ENCODE measurements at regions of chr16 and their contacts with region 1.

Region 1: DNA sequence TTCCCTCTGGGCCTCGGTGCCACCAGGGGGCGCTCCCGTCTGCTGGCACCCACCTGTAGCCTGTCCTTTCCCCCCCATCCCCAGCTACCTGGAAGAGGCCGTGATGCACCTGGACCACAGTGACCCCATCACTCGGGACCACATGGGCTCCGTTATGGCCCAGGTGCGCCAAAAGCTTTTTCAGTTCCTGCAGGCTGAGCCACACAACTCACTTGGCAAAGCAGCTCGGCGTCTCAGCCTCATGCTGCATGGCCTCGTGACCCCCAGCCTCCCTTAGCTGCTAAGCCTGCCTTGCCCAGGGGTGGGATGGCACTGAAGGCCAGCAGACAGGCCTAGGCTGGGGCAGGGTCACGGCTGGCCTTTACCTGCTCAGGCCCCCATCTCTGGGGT is 818 bp upstream of the NRN1L start:
- DNase-seq: peak; percentile 73
- H3K4me3 Mint-ChIP-seq: no peak overlapping the region
- H3K27ac Mint-ChIP-seq: no peak overlapping the region
- H3K4me1 Mint-ChIP-seq: no peaks in the 10 kb centered on the region
- H3K27me3 Mint-ChIP-seq: no peaks in the 10 kb centered on the region

Region 2: GRCh38 chr16:67750466-67750865 is 133.4 kb before region 1 on chr16:
- CTCF ChIA-PET with region 1: no interaction called
- POLR2A ChIA-PET with region 1: no interaction called
- intact Hi-C with region 1: no loop called
- DNase-seq: no peak
- H3K4me3 Mint-ChIP-seq: no peak overlapping the region
- H3K27ac Mint-ChIP-seq: no peak overlapping the region
- H3K4me1 Mint-ChIP-seq: no peaks in the 10 kb centered on the region
- H3K27me3 Mint-ChIP-seq: no peaks in the 10 kb centered on the region

Region 3: DNA sequence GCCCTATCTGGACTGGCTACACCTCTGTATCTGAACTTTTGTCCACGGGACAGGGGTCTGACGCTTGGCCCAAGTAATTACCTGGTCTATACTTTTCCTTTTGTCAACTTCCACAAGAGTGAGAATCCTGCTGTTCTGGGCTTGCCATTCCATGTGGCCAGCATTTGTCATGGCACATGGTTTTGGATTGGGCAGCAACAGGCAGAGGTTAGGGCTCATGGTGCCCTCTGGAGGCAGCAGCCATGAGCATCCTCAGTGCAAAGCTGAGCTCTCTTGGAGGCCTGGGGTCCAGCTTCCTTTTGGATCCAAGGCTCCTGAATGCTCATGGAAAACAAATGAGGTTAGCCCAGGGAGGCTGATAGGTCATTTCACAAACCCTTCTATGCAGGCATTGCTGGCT is 18.6 kb before region 1 on chr16:
- CTCF ChIA-PET with region 1: interaction called, 18 read pairs
- POLR2A ChIA-PET with region 1: no interaction called
- intact Hi-C with region 1: no loop called
- DNase-seq: peak; percentile 32
- H3K4me3 Mint-ChIP-seq: no peak overlapping the region
- H3K27ac Mint-ChIP-seq: no peak overlapping the region
- H3K4me1 Mint-ChIP-seq: peaks cover 10% of the 10 kb centered on the region
- H3K27me3 Mint-ChIP-seq: no peaks in the 10 kb centered on the region

Region 4: GRCh38 chr16:67872786-67873537 is 10.9 kb before region 1 on chr16 and contains the start of gene EDC4:
- CTCF ChIA-PET with region 1: interaction called, 20 read pairs
- POLR2A ChIA-PET with region 1: no interaction called
- intact Hi-C with region 1: no loop called
- DNase-seq: peak; percentile 93
- H3K4me3 Mint-ChIP-seq: peak within 1 kb of the TSS; percentile 95
- H3K27ac Mint-ChIP-seq: peak within 1 kb of the TSS; percentile 88
- H3K4me1 Mint-ChIP-seq: peaks cover 28% of the 10 kb centered on the region
- H3K27me3 Mint-ChIP-seq: no peaks in the 10 kb centered on the region
- total RNA-seq, gene EDC4: 88.6 to 94.2 TPM

Region 5: GRCh38 chr16:67917852-67918236 is 34.0 kb after region 1 on chr16:
- CTCF ChIA-PET with region 1: interaction called, 41 read pairs
- POLR2A ChIA-PET with region 1: interaction called, 5 read pairs
- intact Hi-C with region 1: no loop called
- DNase-seq: peak; percentile 75
- H3K4me3 Mint-ChIP-seq: no peak overlapping the region
- H3K27ac Mint-ChIP-seq: peak overlapping the region; percentile 77
- H3K4me1 Mint-ChIP-seq: peaks cover 31% of the 10 kb centered on the region
- H3K27me3 Mint-ChIP-seq: no peaks in the 10 kb centered on the region

Region 6: DNA sequence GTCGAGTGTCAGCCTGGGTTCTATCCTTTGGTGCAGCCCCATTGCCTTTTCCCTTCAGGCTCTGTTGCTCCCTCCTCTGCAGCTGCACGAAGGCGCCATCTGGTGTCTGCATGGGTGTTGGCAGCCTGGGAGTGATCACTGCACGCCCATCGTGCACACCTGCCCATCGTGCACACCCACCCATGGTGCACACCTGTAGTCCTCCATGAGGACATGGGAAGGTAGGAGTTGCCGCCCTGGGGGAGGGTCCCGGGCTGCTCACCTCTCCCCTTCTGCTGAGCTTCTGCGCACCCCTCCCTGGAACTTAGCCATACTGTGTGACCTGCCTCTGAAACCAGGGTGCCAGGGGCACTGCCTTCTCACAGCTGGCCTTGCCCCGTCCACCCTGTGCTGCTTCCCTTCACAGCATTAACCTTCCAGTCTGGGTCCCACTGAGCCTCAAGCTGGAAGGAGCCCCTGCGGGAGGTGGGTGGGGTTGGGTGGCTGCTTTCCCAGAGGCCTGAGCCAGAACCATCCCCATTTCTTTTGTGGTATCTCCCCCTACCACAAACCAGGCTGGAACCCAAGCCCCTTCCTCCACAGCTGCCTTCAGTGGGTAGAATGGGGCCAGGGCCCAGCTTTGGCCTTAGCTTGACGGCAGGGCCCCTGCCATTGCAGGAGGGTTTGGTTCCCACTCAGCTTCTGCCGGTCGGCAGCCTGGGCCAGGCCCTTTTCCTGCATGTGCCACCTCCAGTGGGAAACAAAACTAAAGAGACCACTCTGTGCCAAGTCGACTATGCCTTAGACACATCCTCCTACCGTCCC is 44.9 kb after region 1 on chr16:
- CTCF ChIA-PET with region 1: interaction called, 62 read pairs
- POLR2A ChIA-PET with region 1: interaction called, 5 read pairs
- intact Hi-C with region 1: loop called (anchors 1 kb)
- DNase-seq: peak; percentile 87
- H3K4me3 Mint-ChIP-seq: no peak overlapping the region
- H3K27ac Mint-ChIP-seq: no peak overlapping the region
- H3K4me1 Mint-ChIP-seq: peaks cover 4% of the 10 kb centered on the region
- H3K27me3 Mint-ChIP-seq: no peaks in the 10 kb centered on the region

Region 7: DNA sequence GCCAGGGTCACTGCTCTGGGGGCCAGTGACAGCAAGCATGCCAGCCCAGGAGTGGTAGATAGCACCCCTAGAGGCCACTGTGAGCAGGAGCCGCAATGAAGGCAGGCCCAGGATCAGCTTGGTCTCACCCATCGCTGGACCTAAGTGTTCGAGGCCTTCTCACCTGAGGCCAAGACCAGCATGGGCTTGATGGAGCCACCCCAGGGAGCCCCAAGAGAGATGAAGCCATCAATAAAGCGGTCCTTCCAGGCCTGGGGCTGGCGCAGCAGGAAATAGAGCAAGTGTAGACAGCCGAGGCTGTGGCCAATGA is 58.3 kb after region 1 on chr16:
- CTCF ChIA-PET with region 1: interaction called, 20 read pairs
- POLR2A ChIA-PET with region 1: interaction called, 9 read pairs
- intact Hi-C with region 1: no loop called
- DNase-seq: peak; percentile 50
- H3K4me3 Mint-ChIP-seq: no peak overlapping the region
- H3K27ac Mint-ChIP-seq: no peak overlapping the region
- H3K4me1 Mint-ChIP-seq: peaks cover 27% of the 10 kb centered on the region
- H3K27me3 Mint-ChIP-seq: no peaks in the 10 kb centered on the region

Measured in activated CD4-positive, alpha-beta memory T cell treated with anti-CD3 and anti-CD28 coated beads for 36 hours (primary cell).